Activated B cell treated with CpG ODN at 0.5 μM for 24 hours (primary cell): ENCODE measurements at regions of chrX and their contacts with region 1.

Region 1: DNA sequence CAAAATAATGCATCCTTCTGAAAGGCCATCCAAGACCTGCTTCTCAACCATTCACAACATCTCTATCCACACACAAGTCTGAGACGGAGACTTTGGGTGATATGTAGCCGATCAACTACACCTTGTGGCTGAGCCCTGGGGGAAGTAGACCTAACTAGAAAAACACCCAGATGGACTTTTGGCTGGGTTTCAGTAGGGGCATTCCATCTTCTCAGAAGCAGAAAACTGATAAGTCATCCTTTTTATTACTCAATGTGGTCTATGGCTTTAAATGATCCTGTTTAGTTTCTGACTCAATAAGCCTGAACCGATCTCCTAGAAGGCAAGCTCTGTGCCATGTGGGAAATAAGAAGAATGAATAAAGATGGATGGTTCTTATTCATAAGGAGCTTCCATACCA is 82.5 kb upstream of the AFF2 start:
- DNase-seq: no peak
- ATAC-seq: no peak
- H3K4me3 Mint-ChIP-seq: no peak overlapping the region
- H3K27ac Mint-ChIP-seq: no peak overlapping the region
- H3K4me1 Mint-ChIP-seq: peaks cover 16% of the 10 kb centered on the region
- H3K27me3 Mint-ChIP-seq: no peaks in the 10 kb centered on the region
- CTCF ChIP-seq: no peak

Region 2: DNA sequence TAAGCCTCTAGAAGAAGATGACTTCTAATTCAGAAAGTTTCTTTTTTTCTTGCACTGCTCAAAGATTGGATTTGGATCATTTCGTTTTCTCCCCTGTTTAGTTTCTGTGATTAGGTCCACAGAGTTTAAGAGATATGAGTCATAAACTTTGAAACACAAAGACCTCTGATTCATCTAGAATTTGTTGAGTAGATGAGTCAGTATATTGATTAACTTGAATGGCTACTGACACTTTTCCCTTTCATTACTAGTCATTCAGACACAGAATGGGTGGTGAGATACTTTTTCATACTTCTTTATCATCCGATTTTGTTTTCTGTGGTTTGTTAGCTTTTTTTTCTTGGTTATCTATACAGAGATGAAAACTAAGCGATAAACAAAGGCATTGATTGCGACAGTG is 48.4 kb after region 1 on chrX:
- CTCF ChIA-PET with region 1: no interaction called
- POLR2A ChIA-PET with region 1: no interaction called
- intact Hi-C with region 1: loop called (anchors 2 kb)
- DNase-seq: no peak
- ATAC-seq: peak; percentile 28
- H3K4me3 Mint-ChIP-seq: no peak overlapping the region
- H3K27ac Mint-ChIP-seq: no peak overlapping the region
- H3K4me1 Mint-ChIP-seq: peaks cover 2% of the 10 kb centered on the region
- H3K27me3 Mint-ChIP-seq: no peaks in the 10 kb centered on the region
- CTCF ChIP-seq: no peak

Region 3: DNA sequence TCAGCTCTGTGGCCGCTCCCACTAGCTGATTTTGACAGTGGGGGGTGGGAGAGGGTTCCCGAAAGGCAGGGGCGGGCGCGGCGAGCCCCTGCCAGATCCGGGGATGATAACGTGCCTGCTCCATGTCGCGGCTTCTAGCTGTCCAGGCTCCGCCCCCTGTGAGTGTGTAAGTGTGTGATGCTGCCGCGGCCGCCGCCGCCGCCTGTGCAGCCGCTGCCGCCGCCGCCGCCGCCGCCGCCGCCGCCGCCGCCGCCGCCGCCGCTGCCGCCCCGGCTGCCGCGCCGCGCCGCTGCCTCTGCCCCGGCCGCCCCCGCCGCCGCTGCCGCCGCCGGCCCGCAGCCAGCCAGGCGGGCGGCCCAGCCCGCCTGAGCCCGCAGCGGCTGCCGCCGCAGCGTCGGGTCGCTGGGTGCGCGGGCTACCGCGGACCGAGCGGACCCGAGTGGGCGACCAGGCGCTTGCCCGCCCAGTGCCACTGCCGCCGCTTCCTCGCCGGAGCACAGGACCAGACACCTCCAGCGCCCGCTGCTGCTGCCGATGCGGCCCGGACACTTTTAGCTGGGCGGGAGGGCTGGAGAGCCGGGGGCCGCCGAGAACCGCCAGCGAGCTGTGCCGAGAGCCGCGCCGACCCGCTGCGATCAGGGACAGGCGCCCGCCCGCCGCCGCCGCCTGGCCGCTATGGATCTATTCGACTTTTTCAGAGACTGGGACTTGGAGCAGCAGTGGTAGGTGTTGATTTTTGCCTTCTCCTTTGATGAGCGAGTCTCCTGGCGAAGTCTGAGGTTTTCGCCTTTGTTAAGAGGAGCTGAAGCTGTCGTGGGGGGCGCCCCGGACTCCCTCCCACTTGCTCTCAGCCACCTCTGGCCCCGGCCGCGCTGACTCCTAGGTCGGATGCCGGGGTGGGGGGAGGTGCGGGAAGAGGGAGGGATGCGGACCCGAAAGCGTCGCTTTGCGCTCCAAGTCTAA is 82.8 kb after region 1 on chrX and contains the start of gene AFF2:
- CTCF ChIA-PET with region 1: no interaction called
- POLR2A ChIA-PET with region 1: no interaction called
- intact Hi-C with region 1: loop called (anchors 5 kb)
- DNase-seq: peak; percentile 33
- ATAC-seq: peak; percentile 74
- H3K4me3 Mint-ChIP-seq: peak within 1 kb of the TSS; percentile 82
- H3K27ac Mint-ChIP-seq: no peak within 1 kb of the TSS
- H3K4me1 Mint-ChIP-seq: peaks cover 5% of the 10 kb centered on the region
- H3K27me3 Mint-ChIP-seq: peaks cover 2% of the 10 kb centered on the region
- CTCF ChIP-seq: no peak
- total RNA-seq, gene AFF2: 2.8 and 3.4 TPM in 2 replicates

Region 4: DNA sequence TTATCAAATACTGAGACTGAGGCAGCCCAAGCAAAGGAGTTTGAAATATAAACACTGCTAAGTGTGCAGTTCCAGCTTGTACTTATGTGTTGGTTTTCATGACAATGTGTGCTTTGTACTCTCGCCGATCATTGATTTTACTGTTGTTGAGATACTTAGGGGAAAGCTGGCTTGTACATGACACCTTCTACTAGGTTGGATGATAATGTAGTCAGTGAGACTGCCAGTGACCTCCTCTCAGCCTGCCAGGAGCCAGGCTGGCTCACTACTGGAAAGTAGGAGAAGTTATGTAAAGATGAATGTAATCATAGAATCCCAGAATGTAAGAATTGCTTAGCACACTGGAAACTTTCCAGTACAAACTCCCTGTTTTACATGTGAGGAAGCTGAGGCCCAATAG is 214.5 kb after region 1 on chrX:
- CTCF ChIA-PET with region 1: no interaction called
- POLR2A ChIA-PET with region 1: no interaction called
- intact Hi-C with region 1: no loop called
- DNase-seq: no peak
- ATAC-seq: no peak
- H3K4me3 Mint-ChIP-seq: no peak overlapping the region
- H3K27ac Mint-ChIP-seq: no peak overlapping the region
- H3K4me1 Mint-ChIP-seq: no peaks in the 10 kb centered on the region
- H3K27me3 Mint-ChIP-seq: no peaks in the 10 kb centered on the region
- CTCF ChIP-seq: no peak

Region 5: DNA sequence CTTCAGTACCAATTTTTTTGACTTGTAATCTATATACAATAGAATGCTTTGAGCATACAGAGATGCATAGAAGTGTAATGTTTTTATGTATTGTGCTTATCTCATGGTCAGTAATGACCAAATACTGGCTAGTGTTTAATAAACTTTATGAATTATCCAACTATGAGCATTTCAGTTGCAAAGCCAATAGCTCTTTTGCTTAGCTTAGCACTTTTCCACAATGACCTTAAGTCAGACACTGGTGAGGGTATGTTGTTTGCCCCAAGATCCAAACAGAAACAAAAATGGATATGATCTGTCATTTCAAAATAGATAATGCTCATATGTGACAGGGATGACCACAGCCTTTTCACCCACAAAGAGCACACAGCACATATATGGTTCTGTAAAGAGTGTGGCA is 475.5 kb after region 1 on chrX:
- CTCF ChIA-PET with region 1: no interaction called
- POLR2A ChIA-PET with region 1: no interaction called
- intact Hi-C with region 1: no loop called
- DNase-seq: no peak
- ATAC-seq: no peak
- H3K4me3 Mint-ChIP-seq: no peak overlapping the region
- H3K27ac Mint-ChIP-seq: no peak overlapping the region
- H3K4me1 Mint-ChIP-seq: no peaks in the 10 kb centered on the region
- H3K27me3 Mint-ChIP-seq: no peaks in the 10 kb centered on the region
- CTCF ChIP-seq: no peak